T-cell (primary cell): ENCODE measurements at regions of chr2 and their contacts with region 1.

Region 1: DNA sequence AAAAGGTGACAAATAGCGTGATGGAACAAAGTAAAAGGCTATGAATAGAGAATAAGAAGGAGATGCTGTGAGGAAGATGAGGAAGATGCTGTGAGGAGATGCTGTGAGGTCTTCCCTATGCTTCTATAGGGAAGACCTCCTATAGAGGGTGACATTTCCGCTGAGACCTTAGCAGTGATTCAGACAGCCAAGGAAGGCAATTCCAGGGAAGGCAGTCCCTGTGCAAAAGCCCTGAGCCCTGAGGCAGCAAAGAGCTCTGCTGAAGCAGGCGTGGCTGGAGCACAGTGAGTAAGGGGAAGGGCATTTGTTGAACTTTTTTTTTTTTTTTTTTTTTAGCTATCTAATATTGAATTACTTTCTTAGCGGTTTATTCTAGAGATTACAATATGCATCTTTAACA is 142.7 kb upstream of the FOSL2 start:
- DNase-seq: no peak
- ATAC-seq: no peak
- H3K4me3 ChIP-seq: no peak overlapping the region
- H3K4me3 Mint-ChIP-seq: no peak overlapping the region
- H3K27ac ChIP-seq: no peak overlapping the region
- H3K27ac Mint-ChIP-seq: peak overlapping the region; percentile 18 to 60
- H3K4me1 ChIP-seq: peaks cover 10 to 15% of the 10 kb centered on the region in 2 experiments
- H3K4me1 Mint-ChIP-seq: peaks cover 38 to 55% (median 45%) of the 10 kb centered on the region in 3 donors
- H3K27me3 ChIP-seq: no peaks in the 10 kb centered on the region
- H3K27me3 Mint-ChIP-seq: no peaks in the 10 kb centered on the region

Region 2: DNA sequence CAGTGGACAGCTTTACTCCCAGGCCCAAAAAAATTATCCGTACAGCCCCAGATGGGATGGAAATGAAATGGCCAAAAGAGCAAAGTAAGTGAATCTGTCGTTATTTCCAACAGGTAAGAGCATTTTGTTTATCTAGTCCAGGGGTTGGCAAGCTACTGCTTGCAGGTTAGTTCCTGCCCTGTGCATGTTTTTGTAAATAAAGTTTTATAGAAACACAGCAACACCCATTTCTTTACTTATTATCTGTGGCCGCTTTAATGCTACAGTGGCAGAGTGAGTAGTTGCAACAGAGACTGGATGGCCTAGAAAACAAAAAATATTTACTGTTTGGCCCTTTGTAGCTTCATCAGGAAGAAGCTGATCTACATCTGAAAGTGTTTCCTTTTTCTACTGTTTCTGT is 48.4 kb after region 1 on chr2:
- CTCF ChIA-PET with region 1: no interaction called
- POLR2A ChIA-PET with region 1: interaction called in 1 of 2 experiments, 13 read pairs
- DNase-seq: no peak
- ATAC-seq: no peak
- H3K4me3 ChIP-seq: no peak overlapping the region
- H3K4me3 Mint-ChIP-seq: no peak overlapping the region
- H3K27ac ChIP-seq: no peak overlapping the region
- H3K27ac Mint-ChIP-seq: no peak overlapping the region
- H3K4me1 ChIP-seq: no peaks in the 10 kb centered on the region
- H3K4me1 Mint-ChIP-seq: no peaks in the 10 kb centered on the region
- H3K27me3 ChIP-seq: no peaks in the 10 kb centered on the region
- H3K27me3 Mint-ChIP-seq: no peaks in the 10 kb centered on the region